Activated CD4-positive, alpha-beta T cell treated with anti-CD3 and anti-CD28 coated beads, Interleukin-2, amount 10 ng/mL, durations not matched to agents 24 days and 14 days (primary cell): ENCODE measurements at regions of chr15 and their contacts with region 1.

Region 1: GRCh38 chr15:70488002-70488605 is 275.3 kb downstream of the UACA start:
- DNase-seq: peak; percentile 93
- H3K4me3 Mint-ChIP-seq: no peak overlapping the region
- H3K27ac Mint-ChIP-seq: peak overlapping the region; percentile 80
- H3K4me1 Mint-ChIP-seq: peaks cover 80% of the 10 kb centered on the region
- H3K27me3 Mint-ChIP-seq: peaks cover 36% of the 10 kb centered on the region

Region 2: GRCh38 chr15:69523010-69524001 is 964.8 kb before region 1 on chr15:
- intact Hi-C with region 1: loop called (anchors 2 kb)
- DNase-seq: peak; percentile 91
- H3K4me3 Mint-ChIP-seq: no peak overlapping the region
- H3K27ac Mint-ChIP-seq: peak overlapping the region; percentile 22
- H3K4me1 Mint-ChIP-seq: peaks cover 6% of the 10 kb centered on the region
- H3K27me3 Mint-ChIP-seq: peaks cover 15% of the 10 kb centered on the region

Region 3: GRCh38 chr15:69755551-69756310 is 732.4 kb before region 1 on chr15:
- intact Hi-C with region 1: loop called (anchors 1 kb)
- DNase-seq: peak; percentile 94
- H3K4me3 Mint-ChIP-seq: peak overlapping the region; percentile 69
- H3K27ac Mint-ChIP-seq: peak overlapping the region; percentile 87
- H3K4me1 Mint-ChIP-seq: peaks cover 67% of the 10 kb centered on the region
- H3K27me3 Mint-ChIP-seq: peaks cover 2% of the 10 kb centered on the region

Region 4: GRCh38 chr15:69951907-69952555 is 536.1 kb before region 1 on chr15:
- intact Hi-C with region 1: no loop called
- DNase-seq: no peak
- H3K4me3 Mint-ChIP-seq: no peak overlapping the region
- H3K27ac Mint-ChIP-seq: no peak overlapping the region
- H3K4me1 Mint-ChIP-seq: no peaks in the 10 kb centered on the region
- H3K27me3 Mint-ChIP-seq: peaks cover 13% of the 10 kb centered on the region

Region 5: DNA sequence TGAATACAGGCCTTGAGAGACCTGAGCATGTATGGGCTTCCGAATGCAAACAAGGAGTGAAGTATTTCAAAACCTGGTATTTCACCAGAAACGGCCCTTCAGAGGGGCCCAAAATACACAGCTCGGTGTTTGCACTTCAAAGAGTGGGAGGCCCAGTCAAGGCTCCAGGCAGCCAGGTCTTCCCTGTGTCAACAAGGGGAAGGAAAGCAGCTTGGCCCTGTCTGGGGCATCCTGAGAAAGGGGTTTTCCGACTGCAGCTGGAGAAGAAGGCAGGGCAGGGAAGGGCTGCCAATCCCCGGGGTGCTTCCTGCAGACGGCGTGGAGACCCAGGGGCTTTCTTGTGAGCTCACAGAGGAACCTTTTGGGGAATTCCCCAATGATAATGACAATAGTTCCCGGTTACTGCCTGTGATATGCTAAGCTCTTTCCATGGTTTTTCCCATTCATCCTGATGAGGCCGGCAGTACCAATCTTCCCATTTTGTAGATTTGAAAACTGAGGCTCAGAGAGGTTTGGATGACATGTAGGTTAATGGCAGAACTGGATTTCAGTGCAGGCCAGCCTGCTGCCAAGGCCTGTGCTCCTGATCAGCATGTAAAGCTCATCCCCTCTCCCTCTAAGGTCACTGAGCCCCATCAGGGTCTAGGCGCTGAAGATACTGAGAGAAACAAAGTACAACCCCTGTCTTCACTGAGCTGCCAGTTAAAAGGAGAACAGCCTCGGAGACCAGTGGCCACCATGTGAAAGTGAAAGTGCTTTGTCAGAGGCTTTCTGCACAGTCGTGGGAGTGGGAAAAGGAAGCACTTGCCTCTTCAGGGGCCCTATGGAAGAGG is 347.3 kb before region 1 on chr15:
- intact Hi-C with region 1: loop called (anchors 2 kb)
- DNase-seq: peak; percentile 78
- H3K4me3 Mint-ChIP-seq: peak overlapping the region; percentile 3
- H3K27ac Mint-ChIP-seq: peak overlapping the region; percentile 59
- H3K4me1 Mint-ChIP-seq: peaks cover 28% of the 10 kb centered on the region
- H3K27me3 Mint-ChIP-seq: peaks cover 38% of the 10 kb centered on the region

Region 6: GRCh38 chr15:70463460-70463881 is 24.6 kb before region 1 on chr15:
- intact Hi-C with region 1: loop called (anchors 2 kb)
- DNase-seq: no peak
- H3K4me3 Mint-ChIP-seq: no peak overlapping the region
- H3K27ac Mint-ChIP-seq: peak overlapping the region; percentile 22
- H3K4me1 Mint-ChIP-seq: peaks cover 27% of the 10 kb centered on the region
- H3K27me3 Mint-ChIP-seq: peaks cover 75% of the 10 kb centered on the region

Region 7: GRCh38 chr15:70512772-70513362 is 24.8 kb after region 1 on chr15:
- intact Hi-C with region 1: loop called (anchors 1 kb)
- DNase-seq: peak; percentile 91
- H3K4me3 Mint-ChIP-seq: no peak overlapping the region
- H3K27ac Mint-ChIP-seq: no peak overlapping the region
- H3K4me1 Mint-ChIP-seq: peaks cover 31% of the 10 kb centered on the region
- H3K27me3 Mint-ChIP-seq: peaks cover 31% of the 10 kb centered on the region

Region 8: GRCh38 chr15:70535071-70535954 is 47.2 kb after region 1 on chr15:
- intact Hi-C with region 1: no loop called
- DNase-seq: peak; percentile 90
- H3K4me3 Mint-ChIP-seq: peak overlapping the region; percentile 75
- H3K27ac Mint-ChIP-seq: peak overlapping the region; percentile 76
- H3K4me1 Mint-ChIP-seq: peaks cover 36% of the 10 kb centered on the region
- H3K27me3 Mint-ChIP-seq: peaks cover 10% of the 10 kb centered on the region